Activated CD4-positive, alpha-beta T cell treated with anti-CD3 and anti-CD28 coated beads, Interleukin-2, amount 10 ng/mL, durations not matched to agents 24 days and 14 days (primary cell): ENCODE measurements at regions of chr3 and their contacts with region 1.

Region 1: GRCh38 chr3:191388823-191389222 is 58.5 kb upstream of the UTS2B start:
- DNase-seq: no peak
- H3K4me3 Mint-ChIP-seq: no peak overlapping the region
- H3K27ac Mint-ChIP-seq: no peak overlapping the region
- H3K4me1 Mint-ChIP-seq: no peaks in the 10 kb centered on the region
- H3K27me3 Mint-ChIP-seq: no peaks in the 10 kb centered on the region

Region 2: DNA sequence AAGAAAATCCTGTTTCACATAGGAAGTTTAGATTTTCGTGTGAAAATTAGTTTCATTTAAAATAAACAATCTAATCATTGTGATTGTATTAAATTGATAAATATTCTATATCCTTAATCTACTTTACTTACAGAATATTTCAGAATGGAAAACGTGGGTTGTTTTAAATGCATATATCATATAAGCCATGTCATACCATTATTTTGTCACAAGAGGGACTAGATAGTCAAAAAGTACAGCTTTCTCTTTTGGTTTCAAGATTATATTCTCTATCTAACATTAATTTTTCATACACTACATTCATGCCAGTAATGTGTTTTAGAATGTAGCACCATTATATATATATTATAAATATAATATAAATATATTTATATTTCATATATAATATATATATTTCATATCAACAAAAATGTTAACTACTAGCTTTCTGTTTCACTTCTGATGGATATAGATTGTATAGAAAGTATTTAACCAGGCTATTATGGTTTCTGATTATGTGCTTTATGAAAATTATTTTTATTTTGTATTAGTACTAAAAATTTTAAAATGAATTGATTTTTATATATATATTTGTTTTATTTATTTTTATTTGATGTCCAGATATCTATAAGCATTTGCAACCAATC is 144.5 kb before region 1 on chr3:
- intact Hi-C with region 1: loop called (anchors 5 kb)
- DNase-seq: no peak
- H3K4me3 Mint-ChIP-seq: no peak overlapping the region
- H3K27ac Mint-ChIP-seq: no peak overlapping the region
- H3K4me1 Mint-ChIP-seq: no peaks in the 10 kb centered on the region
- H3K27me3 Mint-ChIP-seq: no peaks in the 10 kb centered on the region